ENCODE measurements at regions of chr4 and their contacts with region 1.

Region 1: DNA sequence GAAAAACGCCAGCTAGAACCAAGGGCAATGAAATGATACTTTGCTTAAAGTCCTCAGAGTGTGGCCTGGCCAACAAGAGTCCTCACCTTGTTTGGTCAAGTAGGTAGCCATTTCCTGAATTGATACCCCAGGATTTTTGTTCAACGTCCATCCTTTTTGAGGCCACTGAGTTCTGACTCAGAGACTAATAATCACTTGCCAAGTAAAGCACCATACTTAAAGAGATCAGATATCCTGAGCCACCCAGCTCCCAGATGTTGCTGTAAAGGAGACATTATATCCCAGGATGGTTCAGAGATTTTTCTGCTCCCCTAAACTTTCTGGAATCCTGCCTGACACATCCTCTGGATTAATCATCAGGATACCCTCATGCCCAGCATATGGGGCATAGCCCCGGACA is 190.9 kb downstream of the RAP1GDS1 start:
- DNase-seq: no peak
- ATAC-seq: no peak
- H3K4me3 Mint-ChIP-seq: no peak overlapping the region
- H3K27ac Mint-ChIP-seq: no peak overlapping the region
- H3K4me1 Mint-ChIP-seq: peaks cover 24% of the 10 kb centered on the region
- H3K27me3 Mint-ChIP-seq: no peaks in the 10 kb centered on the region
- CTCF ChIP-seq: no peak

Region 2: GRCh38 chr4:98467627-98468072 is 15.6 kb after region 1 on chr4:
- CTCF ChIA-PET with region 1: interaction called, 11 read pairs
- POLR2A ChIA-PET with region 1: no interaction called
- intact Hi-C with region 1: no loop called
- DNase-seq: peak; percentile 83
- ATAC-seq: peak; percentile 95
- H3K4me3 Mint-ChIP-seq: peak overlapping the region; percentile 66
- H3K27ac Mint-ChIP-seq: no peak overlapping the region
- H3K4me1 Mint-ChIP-seq: peaks cover 27% of the 10 kb centered on the region
- H3K27me3 Mint-ChIP-seq: no peaks in the 10 kb centered on the region
- CTCF ChIP-seq: peak; percentile 65

Region 3: GRCh38 chr4:98482503-98482846 is 30.4 kb after region 1 on chr4:
- CTCF ChIA-PET with region 1: no interaction called
- POLR2A ChIA-PET with region 1: no interaction called
- intact Hi-C with region 1: no loop called
- DNase-seq: no peak
- ATAC-seq: no peak
- H3K4me3 Mint-ChIP-seq: peak overlapping the region; percentile 51
- H3K27ac Mint-ChIP-seq: peak overlapping the region; percentile 98
- H3K4me1 Mint-ChIP-seq: peaks cover 74% of the 10 kb centered on the region
- H3K27me3 Mint-ChIP-seq: no peaks in the 10 kb centered on the region
- CTCF ChIP-seq: no peak

Measured in activated CD8-positive, alpha-beta T cell treated with anti-CD3 and anti-CD28 coated beads for 36 hours (primary cell).